CD4-positive, alpha-beta T cell (primary cell): ENCODE measurements at regions of chr6 and their contacts with region 1.

Region 1: DNA sequence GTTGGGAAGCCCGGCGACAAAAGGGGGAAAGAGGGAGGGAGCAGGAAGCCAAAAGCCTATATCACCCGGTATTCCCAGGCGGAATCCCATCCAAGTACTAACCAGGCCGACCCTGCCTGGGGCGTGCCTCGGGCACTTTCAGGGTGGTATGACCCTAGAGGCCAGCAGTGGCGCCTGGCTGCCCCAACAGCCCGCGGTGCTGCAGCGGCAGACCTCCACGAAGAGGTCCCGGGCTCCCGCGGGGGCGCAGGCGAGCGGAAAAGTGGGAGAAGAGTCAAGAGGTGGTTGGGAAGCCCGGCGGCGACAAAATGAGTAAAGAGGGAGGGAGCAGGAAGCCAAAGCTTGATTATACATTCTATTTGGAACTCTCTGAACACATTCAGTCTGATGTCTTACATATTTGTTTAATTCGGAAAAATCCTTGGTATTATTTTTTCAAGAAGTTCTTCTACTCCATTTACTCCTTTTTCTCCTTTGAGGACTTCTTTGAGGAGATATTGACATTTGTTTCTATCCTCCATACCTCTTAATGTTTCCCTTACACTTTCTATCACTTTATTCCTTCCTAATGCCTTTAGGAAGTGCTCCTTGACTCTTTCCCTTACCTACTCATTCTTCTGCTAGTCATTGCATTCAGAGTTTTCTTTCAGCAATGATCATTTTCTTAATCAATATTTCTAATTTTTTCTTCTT is 11.5 kb downstream of the TREML4 start:
- DNase-seq: no peak
- ATAC-seq: no peak
- H3K4me3 ChIP-seq: no peak overlapping the region
- H3K4me3 Mint-ChIP-seq: no peak overlapping the region
- H3K27ac ChIP-seq: no peak overlapping the region
- H3K27ac Mint-ChIP-seq: no peak overlapping the region
- H3K4me1 ChIP-seq: no peaks in the 10 kb centered on the region
- H3K4me1 Mint-ChIP-seq: peaks cover 5% of the 10 kb centered on the region
- H3K27me3 ChIP-seq: peaks cover 5 to 7% of the 10 kb centered on the region in 2 experiments
- H3K27me3 Mint-ChIP-seq: peaks cover 18% of the 10 kb centered on the region
- CTCF ChIP-seq: no peak

Region 2: GRCh38 chr6:41191569-41191968 is 48.0 kb before region 1 on chr6:
- CTCF ChIA-PET with region 1: no interaction called
- POLR2A ChIA-PET with region 1: no interaction called
- intact Hi-C with region 1: loop called in 1 of 2 experiments (anchors 5 kb)
- DNase-seq: peak in 8 of 14 experiments; percentile 14 to 59 (median 25)
- ATAC-seq: no peak
- H3K4me3 ChIP-seq: no peak overlapping the region
- H3K4me3 Mint-ChIP-seq: no peak overlapping the region
- H3K27ac ChIP-seq: no peak overlapping the region
- H3K27ac Mint-ChIP-seq: no peak overlapping the region
- H3K4me1 ChIP-seq: peaks cover 33% of the 10 kb centered on the region
- H3K4me1 Mint-ChIP-seq: peaks cover 53% of the 10 kb centered on the region
- H3K27me3 ChIP-seq: no peaks in the 10 kb centered on the region
- H3K27me3 Mint-ChIP-seq: no peaks in the 10 kb centered on the region
- CTCF ChIP-seq: peak; percentile 48

Region 3: DNA sequence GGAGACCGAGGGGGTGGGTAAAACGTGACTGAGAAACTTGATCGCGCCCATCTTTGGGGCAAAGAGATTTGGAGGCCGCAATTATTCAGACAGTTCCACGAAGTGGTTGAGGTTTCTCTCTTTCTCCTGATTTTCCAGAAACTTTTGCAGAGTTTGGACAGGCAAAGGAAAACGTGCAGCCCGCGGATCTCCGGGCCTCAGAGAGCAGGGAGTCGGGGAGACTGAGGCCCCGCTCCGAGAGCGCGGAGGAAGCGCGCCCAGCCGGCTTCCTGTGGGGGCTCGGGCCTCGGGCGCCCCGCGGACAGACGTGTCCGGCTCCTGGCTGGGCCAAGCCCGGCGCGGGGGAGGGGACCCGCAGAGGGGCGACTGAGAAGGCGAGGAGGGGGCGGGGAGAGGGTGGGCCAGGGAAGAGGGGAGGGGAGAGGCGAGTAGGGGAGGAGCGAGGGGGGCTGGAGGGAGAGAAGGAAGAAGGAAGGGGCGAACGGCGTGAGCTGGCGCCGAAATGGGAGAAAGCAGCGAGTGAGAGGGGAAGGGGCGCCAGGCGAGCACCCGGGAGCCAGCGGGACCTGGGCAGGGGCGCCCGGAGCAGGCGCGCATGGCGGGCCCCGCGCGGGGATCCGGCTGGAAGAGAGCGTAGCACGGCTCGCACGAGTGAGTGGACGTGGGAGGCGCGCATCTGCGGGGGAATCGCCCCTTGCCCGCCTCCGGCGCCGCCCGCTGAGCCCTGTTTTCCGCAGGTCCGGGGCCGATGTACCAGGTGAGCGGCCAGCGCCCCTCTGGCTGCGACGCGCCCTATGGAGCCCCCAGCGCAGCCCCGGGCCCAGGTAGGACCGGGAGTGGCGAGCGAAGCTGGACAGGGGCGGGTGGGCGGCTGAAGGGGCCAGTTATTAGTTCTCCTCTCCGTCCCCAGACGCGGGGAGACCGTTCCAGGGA is 398.7 kb after region 1 on chr6 and contains the start of gene MDFI:
- CTCF ChIA-PET with region 1: no interaction called
- POLR2A ChIA-PET with region 1: no interaction called
- intact Hi-C with region 1: no loop called
- DNase-seq: no peak
- ATAC-seq: no peak
- H3K4me3 ChIP-seq: no peak within 1 kb of the TSS
- H3K4me3 Mint-ChIP-seq: peak within 1 kb of the TSS; percentile 71
- H3K27ac ChIP-seq: no peak within 1 kb of the TSS
- H3K27ac Mint-ChIP-seq: no peak within 1 kb of the TSS
- H3K4me1 ChIP-seq: peaks cover 15% of the 10 kb centered on the region
- H3K4me1 Mint-ChIP-seq: peaks cover 13% of the 10 kb centered on the region
- H3K27me3 ChIP-seq: peaks cover 22 to 60% of the 10 kb centered on the region in 2 experiments
- H3K27me3 Mint-ChIP-seq: peaks cover 67% of the 10 kb centered on the region
- CTCF ChIP-seq: no peak
- total RNA-seq, gene MDFI: not detected